ENCODE measurements at regions of chr19 and their contacts with region 1.

Region 1: GRCh38 chr19:6425732-6426620 is 1.4 kb upstream of the KHSRP start:
- DNase-seq: peak in 1 of 35 experiments; percentile 31
- ATAC-seq: no peak
- H3K4me3 ChIP-seq: peak overlapping the region in 1 of 2 donors; percentile 53
- H3K4me3 Mint-ChIP-seq: peak overlapping the region; percentile 71 to 81 (median 71)
- H3K27ac ChIP-seq: peak overlapping the region; percentile 96
- H3K27ac Mint-ChIP-seq: peak overlapping the region; percentile 85 to 97
- H3K4me1 ChIP-seq: peaks cover 13 to 49% of the 10 kb centered on the region in 2 experiments
- H3K4me1 Mint-ChIP-seq: peaks cover 33 to 42% (median 41%) of the 10 kb centered on the region in 3 donors
- H3K27me3 ChIP-seq: peaks cover 0 to 4% of the 10 kb centered on the region in 2 experiments
- H3K27me3 Mint-ChIP-seq: no peaks in the 10 kb centered on the region

Region 2: GRCh38 chr19:5775668-5776309 is 650.2 kb before region 1 on chr19:
- CTCF ChIA-PET with region 1: no interaction called
- POLR2A ChIA-PET with region 1: no interaction called
- DNase-seq: no peak
- ATAC-seq: no peak
- H3K4me3 ChIP-seq: no peak overlapping the region
- H3K4me3 Mint-ChIP-seq: no peak overlapping the region
- H3K27ac ChIP-seq: no peak overlapping the region
- H3K27ac Mint-ChIP-seq: no peak overlapping the region
- H3K4me1 ChIP-seq: no peaks in the 10 kb centered on the region
- H3K4me1 Mint-ChIP-seq: no peaks in the 10 kb centered on the region
- H3K27me3 ChIP-seq: peaks cover 0 to 24% of the 10 kb centered on the region in 2 experiments
- H3K27me3 Mint-ChIP-seq: peaks cover 0 to 3% of the 10 kb centered on the region in 2 donors

Region 3: DNA sequence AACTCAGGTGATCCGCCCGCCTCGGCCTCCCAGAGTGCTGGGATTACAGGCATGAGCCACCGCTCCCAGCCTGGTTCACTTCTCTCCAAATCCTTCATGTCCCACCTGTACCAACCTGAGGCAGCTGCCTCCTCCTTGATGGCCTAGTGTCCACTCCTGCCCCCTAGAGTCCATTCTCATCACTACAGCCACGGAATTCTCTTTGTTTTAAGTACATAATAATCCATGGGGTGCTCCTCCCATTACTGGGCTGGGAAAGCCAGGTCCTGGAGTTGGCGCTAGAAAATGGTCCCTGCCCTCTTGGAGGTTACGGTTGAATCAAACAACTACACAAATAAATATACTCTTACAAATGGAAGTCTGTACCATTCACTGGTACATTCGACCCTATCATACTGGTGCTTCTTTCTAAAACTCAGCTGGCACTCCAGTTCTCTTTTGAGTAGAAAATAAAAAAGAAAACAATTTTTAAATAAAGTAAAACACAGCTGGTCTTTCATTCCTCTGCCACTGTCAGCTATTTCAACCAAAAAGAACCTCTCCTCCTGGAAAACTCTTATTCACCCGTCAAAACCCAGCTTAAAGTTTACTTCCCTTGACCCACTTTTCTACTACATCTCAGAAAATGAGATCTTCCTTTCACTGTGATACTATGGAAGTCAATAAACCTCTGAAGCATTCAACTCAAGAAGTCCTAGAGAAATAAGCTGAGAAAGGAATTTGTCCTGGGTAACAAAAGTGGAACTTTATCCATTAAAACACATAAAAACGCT is 900.3 kb after region 1 on chr19:
- CTCF ChIA-PET with region 1: interaction called in 1 of 2 experiments, 11 read pairs
- POLR2A ChIA-PET with region 1: no interaction called
- DNase-seq: peak in 10 of 35 experiments; percentile 19 to 66 (median 32)
- ATAC-seq: no peak
- H3K4me3 ChIP-seq: no peak overlapping the region
- H3K4me3 Mint-ChIP-seq: no peak overlapping the region
- H3K27ac ChIP-seq: no peak overlapping the region
- H3K27ac Mint-ChIP-seq: no peak overlapping the region
- H3K4me1 ChIP-seq: no peaks in the 10 kb centered on the region
- H3K4me1 Mint-ChIP-seq: no peaks in the 10 kb centered on the region
- H3K27me3 ChIP-seq: peaks cover 0 to 5% of the 10 kb centered on the region in 2 experiments
- H3K27me3 Mint-ChIP-seq: peaks cover 0 to under 1% of the 10 kb centered on the region in 2 donors